Mammary epithelial cell (primary cell): ENCODE measurements at regions of chr2 and their contacts with region 1.

Region 1: GRCh38 chr2:17076533-17076932 is 410.9 kb upstream of the CYRIA start:
- DNase-seq: no peak
- H3K4me3 ChIP-seq: no peak overlapping the region
- H3K27ac ChIP-seq: no peak overlapping the region
- H3K4me1 ChIP-seq: no peaks in the 10 kb centered on the region
- H3K27me3 ChIP-seq: no peaks in the 10 kb centered on the region
- CTCF ChIP-seq: no peak

Region 2: DNA sequence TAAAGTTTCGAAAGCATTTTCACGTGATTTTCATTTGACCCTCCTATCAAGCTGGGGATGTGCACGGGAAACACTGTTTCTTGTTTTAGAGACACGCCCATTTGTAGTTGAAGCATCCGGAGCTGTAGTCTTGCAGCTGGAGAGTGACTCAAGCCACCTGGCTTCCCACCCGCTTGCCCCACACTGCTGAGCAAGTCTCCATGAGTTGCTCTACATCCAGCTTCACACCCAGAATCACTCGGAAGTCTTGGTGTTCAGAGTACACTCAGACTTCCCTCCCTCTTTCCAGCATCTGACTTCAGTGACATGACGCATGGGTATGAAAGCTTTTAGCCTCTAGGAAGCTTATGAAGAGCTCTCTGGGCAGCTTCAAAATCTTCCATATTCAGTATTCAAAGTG is 1777.8 kb before region 1 on chr2:
- CTCF ChIA-PET with region 1: interaction called, 11 read pairs
- dilution Hi-C with region 1: no loop called
- in situ Hi-C with region 1: no loop called
- intact Hi-C with region 1: no loop called
- DNase-seq: peak; percentile 5
- H3K4me3 ChIP-seq: no peak overlapping the region
- H3K27ac ChIP-seq: no peak overlapping the region
- H3K4me1 ChIP-seq: no peaks in the 10 kb centered on the region
- H3K27me3 ChIP-seq: no peaks in the 10 kb centered on the region
- CTCF ChIP-seq: no peak